ENCODE measurements at regions of chr5 and their contacts with region 1.

Region 1: DNA sequence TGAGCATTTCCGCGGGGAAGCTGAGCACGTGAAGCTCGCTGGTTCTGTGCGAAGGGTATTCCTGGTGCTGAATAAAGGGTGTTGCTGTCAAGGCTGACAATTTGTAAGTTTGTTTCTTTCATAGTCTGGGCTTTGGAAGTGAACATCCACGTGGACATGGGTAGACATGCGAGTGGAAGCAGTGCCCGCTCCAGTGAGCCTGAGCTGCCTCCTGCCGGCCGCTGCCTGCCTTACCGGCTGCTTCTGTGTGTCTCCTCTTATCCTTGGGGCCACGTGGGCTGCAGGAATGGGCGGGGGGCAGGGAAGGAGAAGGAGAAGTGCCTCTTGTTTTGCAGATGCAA is 14.7 kb downstream of the NDUFS6 start:
- DNase-seq: peak; percentile 60

Region 2: GRCh38 chr5:1004461-1005248 is 811.3 kb before region 1 on chr5:
- intact Hi-C with region 1: loop called in 1 of 2 experiments (anchors 5 kb)
- DNase-seq: peak; percentile 92